ENCODE measurements at regions of chr1 and their contacts with region 1.

Region 1: GRCh38 chr1:183685112-183685713 is 32.1 kb upstream of the APOBEC4 start:
- DNase-seq: peak; percentile 65 to 81 (median 80)
- ATAC-seq: peak; percentile 89
- H3K4me3 ChIP-seq: no peak overlapping the region
- H3K27ac ChIP-seq: no peak overlapping the region
- H3K4me1 ChIP-seq: no peaks in the 10 kb centered on the region
- H3K27me3 ChIP-seq: peaks cover 0 to 7% of the 10 kb centered on the region in 2 experiments; a peak in 1 of 5 replicates
- CTCF ChIP-seq: peak; percentile 65 to 88 (median 71); a peak in 5 of 6 replicates
- EP300 ChIP-seq: no peak
- POLR2A ChIP-seq: no peak
- RAD21 ChIP-seq: peak; percentile 87 to 88

Region 2: DNA sequence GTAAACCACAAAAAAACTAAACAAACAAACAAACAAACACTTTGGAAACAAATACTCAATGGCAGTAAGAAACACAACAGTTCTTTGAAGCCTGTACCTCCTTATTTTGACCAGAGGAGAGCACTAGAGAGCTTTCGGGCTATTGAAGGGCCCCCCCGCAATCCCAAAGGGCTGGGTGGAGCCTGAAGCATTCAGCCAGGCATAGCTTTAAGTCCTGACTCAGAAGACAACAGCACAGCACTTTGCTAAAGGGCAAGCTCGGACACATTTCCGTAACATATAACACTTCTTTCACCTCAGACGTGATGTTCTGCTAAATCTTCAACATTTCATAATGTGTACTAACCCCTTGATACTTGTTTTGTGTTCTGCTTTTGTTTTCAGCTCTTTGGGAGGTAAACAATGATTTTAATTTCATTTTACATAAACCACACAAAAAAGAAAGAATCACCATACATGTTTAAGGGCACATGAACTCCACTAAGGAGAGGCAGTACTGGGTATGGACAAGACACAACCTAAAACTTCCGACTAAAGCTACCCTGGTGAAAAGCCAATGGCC is 722.6 kb before region 1 on chr1:
- CTCF ChIA-PET with region 1: interaction called, 3 read pairs
- POLR2A ChIA-PET with region 1: no interaction called
- in situ Hi-C with region 1: no loop called
- intact Hi-C with region 1: loop called (anchors 10 kb)
- DNase-seq: peak; percentile 86 to 92 (median 90)
- ATAC-seq: peak; percentile 100
- H3K4me3 ChIP-seq: no peak overlapping the region
- H3K27ac ChIP-seq: no peak overlapping the region
- H3K4me1 ChIP-seq: no peaks in the 10 kb centered on the region; a peak in 1 of 5 replicates
- H3K27me3 ChIP-seq: peaks cover 9 to 21% of the 10 kb centered on the region in 2 experiments; a peak in 3 of 5 replicates
- CTCF ChIP-seq: peak; percentile 91 to 98 (median 94)
- EP300 ChIP-seq: peak; percentile 27; the same call in 1 of the 2 replicates
- POLR2A ChIP-seq: no peak
- RAD21 ChIP-seq: peak; percentile 98 to 99

Region 3: GRCh38 chr1:183281553-183282091 is 403.6 kb before region 1 on chr1:
- CTCF ChIA-PET with region 1: interaction called, 9 read pairs
- POLR2A ChIA-PET with region 1: no interaction called
- in situ Hi-C with region 1: no loop called
- intact Hi-C with region 1: loop called (anchors 2 kb)
- DNase-seq: peak; percentile 79 to 85 (median 82)
- ATAC-seq: peak; percentile 98
- H3K4me3 ChIP-seq: no peak overlapping the region
- H3K27ac ChIP-seq: no peak overlapping the region
- H3K4me1 ChIP-seq: no peaks in the 10 kb centered on the region
- H3K27me3 ChIP-seq: peaks cover 19 to 55% of the 10 kb centered on the region in 2 experiments; a peak in 4 of 5 replicates
- CTCF ChIP-seq: peak; percentile 84 to 93 (median 92)
- EP300 ChIP-seq: no peak
- POLR2A ChIP-seq: no peak
- RAD21 ChIP-seq: peak; percentile 82 to 86

Region 4: GRCh38 chr1:183609313-183609712 is 75.9 kb before region 1 on chr1:
- CTCF ChIA-PET with region 1: interaction called, 5 read pairs
- POLR2A ChIA-PET with region 1: no interaction called
- in situ Hi-C with region 1: no loop called
- intact Hi-C with region 1: loop called (anchors 1 kb)
- DNase-seq: peak in 2 of 4 experiments; percentile 27 to 63
- ATAC-seq: peak; percentile 89
- H3K4me3 ChIP-seq: no peak overlapping the region
- H3K27ac ChIP-seq: no peak overlapping the region
- H3K4me1 ChIP-seq: no peaks in the 10 kb centered on the region
- H3K27me3 ChIP-seq: peaks cover 4 to 22% of the 10 kb centered on the region in 2 experiments; a peak in 4 of 5 replicates
- CTCF ChIP-seq: peak; percentile 52 to 76 (median 76)
- EP300 ChIP-seq: no peak
- POLR2A ChIP-seq: no peak
- RAD21 ChIP-seq: peak; percentile 76 to 82

Region 5: GRCh38 chr1:183720028-183720427 is 34.8 kb after region 1 on chr1:
- CTCF ChIA-PET with region 1: no interaction called
- POLR2A ChIA-PET with region 1: no interaction called
- in situ Hi-C with region 1: no loop called
- intact Hi-C with region 1: no loop called
- DNase-seq: no peak
- ATAC-seq: no peak
- H3K4me3 ChIP-seq: no peak overlapping the region
- H3K27ac ChIP-seq: no peak overlapping the region
- H3K4me1 ChIP-seq: no peaks in the 10 kb centered on the region
- H3K27me3 ChIP-seq: no peaks in the 10 kb centered on the region
- CTCF ChIP-seq: no peak
- EP300 ChIP-seq: no peak
- POLR2A ChIP-seq: no peak
- RAD21 ChIP-seq: no peak

Region 6: DNA sequence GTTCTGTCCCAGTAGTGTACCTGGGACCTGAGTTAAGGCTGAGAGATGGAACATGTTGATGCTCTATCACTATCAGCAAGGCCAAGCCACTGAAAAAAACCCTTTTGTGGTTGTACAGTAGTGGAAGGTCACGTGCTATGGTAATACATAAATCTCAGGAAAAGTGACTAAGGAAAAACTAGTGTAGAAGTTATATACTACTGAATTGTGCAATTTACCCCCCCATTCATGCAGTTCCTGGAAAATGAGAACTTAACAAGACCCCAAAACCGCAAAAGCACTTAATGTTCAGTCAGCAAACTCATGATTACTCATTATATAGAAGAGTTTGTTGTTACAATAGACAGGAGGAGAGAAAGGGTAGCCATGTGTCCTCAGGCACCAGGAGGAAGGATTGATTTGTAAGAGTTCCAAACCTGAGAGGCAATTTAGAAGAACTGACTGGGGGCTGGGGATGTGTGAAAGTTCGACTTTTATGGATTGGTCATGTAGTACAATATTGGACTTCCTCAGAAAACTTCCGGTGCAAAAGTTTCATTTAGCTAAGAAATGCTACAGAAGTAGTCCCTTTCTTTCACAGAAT is 211.3 kb after region 1 on chr1:
- CTCF ChIA-PET with region 1: no interaction called
- POLR2A ChIA-PET with region 1: no interaction called
- in situ Hi-C with region 1: no loop called
- intact Hi-C with region 1: no loop called
- DNase-seq: no peak
- ATAC-seq: no peak
- H3K4me3 ChIP-seq: no peak overlapping the region
- H3K27ac ChIP-seq: no peak overlapping the region
- H3K4me1 ChIP-seq: no peaks in the 10 kb centered on the region
- H3K27me3 ChIP-seq: peaks cover 7 to 12% of the 10 kb centered on the region in 2 experiments; a peak in 3 of 5 replicates
- CTCF ChIP-seq: no peak
- EP300 ChIP-seq: no peak
- POLR2A ChIP-seq: no peak
- RAD21 ChIP-seq: no peak

Region 7: GRCh38 chr1:183915625-183916510 is 230.7 kb after region 1 on chr1:
- CTCF ChIA-PET with region 1: interaction called, 3 read pairs
- POLR2A ChIA-PET with region 1: no interaction called
- in situ Hi-C with region 1: no loop called
- intact Hi-C with region 1: loop called (anchors 10 kb)
- DNase-seq: peak; percentile 78 to 90 (median 82)
- ATAC-seq: peak; percentile 93
- H3K4me3 ChIP-seq: no peak overlapping the region
- H3K27ac ChIP-seq: no peak overlapping the region
- H3K4me1 ChIP-seq: peaks cover 0 to 5% of the 10 kb centered on the region in 2 experiments; a peak in 2 of 5 replicates
- H3K27me3 ChIP-seq: peaks cover 0 to 10% of the 10 kb centered on the region in 2 experiments; a peak in 2 of 5 replicates
- CTCF ChIP-seq: peak; percentile 86 to 96 (median 89)
- EP300 ChIP-seq: peak; percentile 45
- POLR2A ChIP-seq: no peak
- RAD21 ChIP-seq: peak; percentile 91 to 95